Breast epithelium (tissue), 4 donors: ENCODE measurements at regions of chr3 and their contacts with region 1.

Region 1: DNA sequence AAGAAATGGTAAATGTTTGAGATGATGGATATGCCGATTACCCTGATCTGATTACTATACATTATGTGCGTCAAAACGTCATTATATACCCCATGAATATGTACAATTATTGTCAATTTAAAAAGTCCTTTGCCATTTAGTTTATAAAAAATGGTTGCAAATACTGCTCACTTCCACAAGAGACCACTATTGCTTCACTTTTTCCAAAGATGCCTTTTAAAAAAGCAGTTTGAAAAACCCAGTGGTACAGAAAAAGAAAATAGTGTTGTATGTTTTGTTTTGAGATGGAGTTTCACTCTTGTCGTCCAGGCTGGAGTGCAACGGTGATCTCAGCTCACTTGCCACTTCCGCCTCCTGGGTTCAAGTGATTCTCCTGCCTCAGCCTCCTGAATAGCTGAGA is 39.3 kb downstream of the EDEM1 start:
- DNase-seq: no peak
- H3K4me3 ChIP-seq: no peak overlapping the region
- H3K27ac ChIP-seq: no peak overlapping the region
- H3K4me1 ChIP-seq: no peaks in the 10 kb centered on the region
- H3K27me3 ChIP-seq: no peaks in the 10 kb centered on the region
- CTCF ChIP-seq: peak in 2 of 3 donors; percentile 42 to 48
- POLR2A ChIP-seq: no peak

Region 2: DNA sequence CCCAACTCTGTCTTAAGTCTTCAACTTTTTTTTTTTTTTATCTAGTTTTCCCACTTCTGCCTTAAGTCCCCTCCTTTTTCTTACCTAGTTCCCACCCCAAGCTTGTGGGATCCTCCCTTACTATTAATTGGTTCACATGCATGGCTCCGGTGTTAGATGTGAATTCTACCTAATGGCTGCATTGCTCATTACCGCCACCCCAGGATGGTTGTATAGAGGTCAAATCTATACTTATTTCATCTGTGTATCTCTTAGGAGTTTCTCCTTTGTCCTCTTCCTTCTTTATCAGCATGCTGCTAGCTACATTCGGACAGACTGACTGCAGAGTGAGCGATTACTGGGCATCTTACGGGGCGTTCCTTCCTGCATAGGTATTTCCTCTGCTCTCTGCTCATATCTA is 1028.4 kb after region 1 on chr3:
- intact Hi-C with region 1: loop called (anchors 5 kb)
- DNase-seq: no peak
- H3K4me3 ChIP-seq: no peak overlapping the region
- H3K27ac ChIP-seq: no peak overlapping the region
- H3K4me1 ChIP-seq: no peaks in the 10 kb centered on the region
- H3K27me3 ChIP-seq: no peaks in the 10 kb centered on the region
- CTCF ChIP-seq: no peak
- POLR2A ChIP-seq: no peak